ENCODE measurements at regions of chr12 and their contacts with region 1.

Region 1: GRCh38 chr12:26097046-26097878 is 27.6 kb downstream of the BHLHE41 start:
- DNase-seq: peak; percentile 67 to 82
- ATAC-seq: peak; percentile 92 to 99 (median 98)
- H3K4me3 ChIP-seq: no peak overlapping the region
- H3K27ac ChIP-seq: no peak overlapping the region
- H3K4me1 ChIP-seq: peaks cover 8% of the 10 kb centered on the region
- H3K27me3 ChIP-seq: no peaks in the 10 kb centered on the region
- CTCF ChIP-seq: peak; percentile 94

Region 2: GRCh38 chr12:26062566-26062965 is 34.7 kb before region 1 on chr12:
- intact Hi-C with region 1: loop called in 1 of 2 experiments (anchors 5 kb)
- DNase-seq: no peak
- ATAC-seq: peak in 2 of 4 donors; percentile 46 to 61
- H3K4me3 ChIP-seq: no peak overlapping the region
- H3K27ac ChIP-seq: no peak overlapping the region
- H3K4me1 ChIP-seq: peaks cover 19% of the 10 kb centered on the region
- H3K27me3 ChIP-seq: no peaks in the 10 kb centered on the region
- CTCF ChIP-seq: no peak

Region 3: GRCh38 chr12:26434299-26435068 is 337.2 kb after region 1 on chr12:
- intact Hi-C with region 1: loop called (anchors 5 to 10 kb)
- DNase-seq: no peak
- ATAC-seq: peak; percentile 71 to 88 (median 82)
- H3K4me3 ChIP-seq: no peak overlapping the region
- H3K27ac ChIP-seq: no peak overlapping the region
- H3K4me1 ChIP-seq: no peaks in the 10 kb centered on the region
- H3K27me3 ChIP-seq: no peaks in the 10 kb centered on the region
- CTCF ChIP-seq: peak; percentile 72

Region 4: GRCh38 chr12:26651566-26652188 is 554.4 kb after region 1 on chr12:
- intact Hi-C with region 1: loop called in 1 of 2 experiments (anchors 2 kb)
- DNase-seq: no peak
- ATAC-seq: peak; percentile 67 to 85 (median 76)
- H3K4me3 ChIP-seq: no peak overlapping the region
- H3K27ac ChIP-seq: no peak overlapping the region
- H3K4me1 ChIP-seq: no peaks in the 10 kb centered on the region
- H3K27me3 ChIP-seq: no peaks in the 10 kb centered on the region
- CTCF ChIP-seq: peak; percentile 83

Region 5: GRCh38 chr12:26701604-26702215 is 604.4 kb after region 1 on chr12:
- intact Hi-C with region 1: loop called in 1 of 2 experiments (anchors 10 kb)
- DNase-seq: no peak
- ATAC-seq: no peak
- H3K4me3 ChIP-seq: no peak overlapping the region
- H3K27ac ChIP-seq: no peak overlapping the region
- H3K4me1 ChIP-seq: peaks cover 7% of the 10 kb centered on the region
- H3K27me3 ChIP-seq: no peaks in the 10 kb centered on the region
- CTCF ChIP-seq: peak; percentile 65